Dorsolateral prefrontal cortex (tissue), 120 donors: ENCODE measurements at regions of chr7 and their contacts with region 1.

Region 1: GRCh38 chr7:129210256-129210988 is 14.4 kb upstream of the AHCYL2 start:
- DNase-seq: peak in 9 of 10 donors; percentile 62 to 86 (median 75)
- H3K4me3 ChIP-seq: no peak overlapping the region
- H3K27ac ChIP-seq: no peak overlapping the region
- H3K27me3 ChIP-seq: no peaks in the 10 kb centered on the region
- CTCF ChIP-seq: peak; percentile 46 to 85 (median 76)

Region 2: GRCh38 chr7:129072479-129073011 is 137.9 kb before region 1 on chr7:
- intact Hi-C with region 1: no loop called
- DNase-seq: no peak
- H3K4me3 ChIP-seq: no peak overlapping the region
- H3K27ac ChIP-seq: no peak overlapping the region
- H3K27me3 ChIP-seq: peaks cover 0 to 18% (median 0%) of the 10 kb centered on the region in 45 donors
- CTCF ChIP-seq: no peak

Region 3: DNA sequence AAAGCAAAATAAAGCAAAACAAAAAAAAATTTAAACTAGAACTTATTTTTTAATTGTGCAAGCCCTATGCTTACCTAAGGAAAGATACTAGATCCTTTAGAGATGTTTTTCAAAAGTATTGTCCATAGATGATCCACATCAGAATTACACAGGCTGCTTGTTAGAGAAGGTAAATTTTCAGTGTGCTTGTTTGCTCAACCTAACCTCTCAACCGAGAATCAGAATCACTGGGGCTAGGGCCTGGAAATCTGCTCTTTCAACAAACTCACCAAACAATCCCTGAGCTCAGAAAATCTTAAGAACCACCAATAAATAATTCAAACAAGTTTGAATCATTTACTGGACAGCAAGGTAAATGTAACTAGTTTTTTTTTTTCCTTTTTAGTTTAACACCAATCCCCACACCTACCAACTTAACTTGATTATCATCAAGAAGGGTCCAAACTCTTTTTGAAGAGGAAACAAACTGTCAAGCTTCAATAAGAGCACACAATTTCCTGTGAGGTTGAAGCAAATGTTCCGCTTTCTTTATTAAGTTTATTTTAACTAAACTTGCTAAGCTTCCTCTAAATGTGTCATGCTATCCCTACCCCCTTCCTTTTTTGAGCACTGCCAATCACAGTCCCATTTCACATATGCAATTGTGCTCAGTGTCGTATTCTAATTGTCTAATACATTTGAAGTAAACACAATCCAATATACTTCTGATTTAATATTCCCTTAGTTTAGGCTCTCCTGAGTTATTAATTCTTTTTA is 73.4 kb before region 1 on chr7:
- intact Hi-C with region 1: no loop called
- DNase-seq: no peak
- H3K4me3 ChIP-seq: no peak overlapping the region
- H3K27ac ChIP-seq: peak overlapping the region in 2 of 59 donors; percentile 10 to 29
- H3K27me3 ChIP-seq: no peaks in the 10 kb centered on the region
- CTCF ChIP-seq: no peak

Region 4: GRCh38 chr7:129163875-129164544 is 46.4 kb before region 1 on chr7:
- intact Hi-C with region 1: loop called in 1 of 2 experiments (anchors 5 kb)
- DNase-seq: peak in 1 of 10 donors; percentile 15
- H3K4me3 ChIP-seq: no peak overlapping the region
- H3K27ac ChIP-seq: no peak overlapping the region
- H3K27me3 ChIP-seq: peaks cover 0 to 4% (median 0%) of the 10 kb centered on the region in 45 donors
- CTCF ChIP-seq: peak; percentile 52 to 87 (median 79)

Region 5: GRCh38 chr7:129343099-129343700 is 132.8 kb after region 1 on chr7:
- intact Hi-C with region 1: no loop called
- DNase-seq: peak in 1 of 10 donors; percentile 7
- H3K4me3 ChIP-seq: no peak overlapping the region
- H3K27ac ChIP-seq: no peak overlapping the region
- H3K27me3 ChIP-seq: no peaks in the 10 kb centered on the region
- CTCF ChIP-seq: peak; percentile 56 to 88 (median 73)

Region 6: GRCh38 chr7:129471402-129471827 is 261.0 kb after region 1 on chr7:
- intact Hi-C with region 1: loop called in 1 of 2 experiments (anchors 5 kb)
- DNase-seq: no peak
- H3K4me3 ChIP-seq: no peak overlapping the region
- H3K27ac ChIP-seq: peak overlapping the region in 1 of 59 donors; percentile 10
- H3K27me3 ChIP-seq: no peaks in the 10 kb centered on the region
- CTCF ChIP-seq: no peak